ENCODE measurements at regions of chr20 and their contacts with region 1.

Region 1: DNA sequence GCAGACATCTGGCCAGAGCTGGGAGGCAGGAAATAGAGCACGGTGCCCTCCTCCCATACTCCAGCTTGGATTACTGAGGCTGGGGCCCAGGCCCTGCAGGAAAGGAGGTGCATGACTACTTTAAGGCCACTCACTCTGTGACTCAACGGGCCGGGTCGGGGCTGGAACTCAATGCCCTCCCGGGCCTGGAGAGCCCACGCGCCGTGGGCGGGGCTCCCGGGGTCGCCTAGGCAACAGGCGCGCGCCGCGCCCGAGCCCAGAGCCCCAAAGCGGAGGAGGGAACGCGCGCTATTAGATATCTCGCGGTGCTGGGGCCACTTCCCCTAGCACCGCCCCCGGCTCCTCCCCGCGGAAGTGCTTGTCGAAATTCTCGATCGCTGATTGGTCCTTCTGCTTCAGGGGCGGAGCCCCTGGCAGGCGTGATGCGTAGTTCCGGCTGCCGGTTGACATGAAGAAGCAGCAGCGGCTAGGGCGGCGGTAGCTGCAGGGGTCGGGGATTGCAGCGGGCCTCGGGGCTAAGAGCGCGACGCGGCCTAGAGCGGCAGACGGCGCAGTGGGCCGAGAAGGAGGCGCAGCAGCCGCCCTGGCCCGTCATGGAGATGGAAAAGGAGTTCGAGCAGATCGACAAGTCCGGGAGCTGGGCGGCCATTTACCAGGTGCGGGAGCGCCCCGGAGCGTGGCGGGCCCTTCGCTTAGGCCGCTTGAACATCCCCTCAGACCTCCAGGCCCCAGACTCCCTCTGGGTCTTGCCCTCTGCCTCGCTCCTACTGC is at the start of gene PTPN1:
- DNase-seq: peak; percentile 97
- ATAC-seq: peak; percentile 90
- H3K4me3 Mint-ChIP-seq: peak within 1 kb of the TSS; percentile 90
- H3K27ac Mint-ChIP-seq: peak within 1 kb of the TSS; percentile 96
- H3K4me1 Mint-ChIP-seq: peaks cover 48% of the 10 kb centered on the region
- H3K27me3 Mint-ChIP-seq: no peaks in the 10 kb centered on the region
- CTCF ChIP-seq: no peak
- total RNA-seq, gene PTPN1: 212 and 227 TPM in 2 replicates

Region 2: GRCh38 chr20:49278036-49278817 is 1231.9 kb before region 1 on chr20 and contains the start of gene ZNFX1:
- CTCF ChIA-PET with region 1: no interaction called
- POLR2A ChIA-PET with region 1: no interaction called
- intact Hi-C with region 1: loop called (anchors 10 kb)
- DNase-seq: peak; percentile 96
- ATAC-seq: peak; percentile 81
- H3K4me3 Mint-ChIP-seq: peak within 1 kb of the TSS; percentile 98
- H3K27ac Mint-ChIP-seq: peak within 1 kb of the TSS; percentile 98
- H3K4me1 Mint-ChIP-seq: peaks cover 66% of the 10 kb centered on the region
- H3K27me3 Mint-ChIP-seq: no peaks in the 10 kb centered on the region
- CTCF ChIP-seq: no peak
- total RNA-seq, gene ZNFX1: 49.6 and 51.9 TPM in 2 replicates

Region 3: DNA sequence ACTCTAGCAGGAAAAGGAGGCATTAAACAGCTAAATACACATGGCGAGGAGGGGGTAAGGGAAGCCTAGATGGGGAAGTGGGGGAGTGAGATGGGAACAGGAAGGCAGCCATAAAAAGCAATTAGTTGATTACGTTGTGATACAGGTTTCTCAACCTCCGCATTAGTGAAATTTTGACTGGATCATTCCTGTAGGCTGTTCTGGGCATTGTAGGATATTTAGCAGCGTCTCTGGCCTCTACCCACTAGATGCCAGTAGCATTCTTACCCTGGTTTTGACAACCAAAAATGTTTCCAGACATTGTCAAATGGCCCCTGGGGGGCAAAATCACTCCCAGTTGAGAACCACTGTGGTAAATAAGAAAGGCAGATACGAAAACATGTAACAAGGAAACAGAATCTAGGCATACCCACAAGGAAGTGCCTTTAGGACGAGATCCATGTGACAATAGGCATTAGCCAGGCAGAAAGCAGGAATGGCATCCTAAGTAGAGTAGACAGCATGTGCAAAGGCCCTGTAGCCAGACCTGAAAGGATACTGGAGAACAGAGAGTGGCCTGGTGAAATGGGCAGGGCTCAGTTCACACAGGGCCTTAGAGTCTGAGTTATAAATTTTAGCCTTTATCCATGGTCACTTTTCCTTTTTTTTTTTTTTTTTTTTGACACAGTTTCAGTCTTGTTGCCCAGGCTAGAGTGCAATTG is 25.7 kb before region 1 on chr20:
- CTCF ChIA-PET with region 1: interaction called, 10 read pairs
- POLR2A ChIA-PET with region 1: interaction called, 20 read pairs
- intact Hi-C with region 1: loop called (anchors 1 kb)
- DNase-seq: no peak
- ATAC-seq: no peak
- H3K4me3 Mint-ChIP-seq: peak overlapping the region; percentile 91
- H3K27ac Mint-ChIP-seq: peak overlapping the region; percentile 93
- H3K4me1 Mint-ChIP-seq: peaks cover 49% of the 10 kb centered on the region
- H3K27me3 Mint-ChIP-seq: no peaks in the 10 kb centered on the region
- CTCF ChIP-seq: no peak

Region 4: GRCh38 chr20:50498081-50498776 is 11.9 kb before region 1 on chr20:
- CTCF ChIA-PET with region 1: interaction called, 8 read pairs
- POLR2A ChIA-PET with region 1: interaction called, 64 read pairs
- intact Hi-C with region 1: loop called (anchors 1 kb)
- DNase-seq: no peak
- ATAC-seq: peak; percentile 81
- H3K4me3 Mint-ChIP-seq: peak overlapping the region; percentile 71
- H3K27ac Mint-ChIP-seq: peak overlapping the region; percentile 99
- H3K4me1 Mint-ChIP-seq: peaks cover 49% of the 10 kb centered on the region
- H3K27me3 Mint-ChIP-seq: no peaks in the 10 kb centered on the region
- CTCF ChIP-seq: no peak

Region 5: GRCh38 chr20:50569864-50570836 is 60.0 kb after region 1 on chr20:
- CTCF ChIA-PET with region 1: interaction called, 154 read pairs
- POLR2A ChIA-PET with region 1: interaction called, 1,679 read pairs
- intact Hi-C with region 1: loop called (anchors 1 kb)
- DNase-seq: peak; percentile 20
- ATAC-seq: peak; percentile 90
- H3K4me3 Mint-ChIP-seq: peak overlapping the region; percentile 46
- H3K27ac Mint-ChIP-seq: peak overlapping the region; percentile 87
- H3K4me1 Mint-ChIP-seq: peaks cover 70% of the 10 kb centered on the region
- H3K27me3 Mint-ChIP-seq: no peaks in the 10 kb centered on the region
- CTCF ChIP-seq: no peak

Region 6: GRCh38 chr20:50588034-50588611 is 78.0 kb after region 1 on chr20:
- CTCF ChIA-PET with region 1: interaction called, 11 read pairs
- POLR2A ChIA-PET with region 1: interaction called, 11 read pairs
- intact Hi-C with region 1: no loop called
- DNase-seq: peak; percentile 63
- ATAC-seq: peak; percentile 64
- H3K4me3 Mint-ChIP-seq: no peak overlapping the region
- H3K27ac Mint-ChIP-seq: peak overlapping the region; percentile 54
- H3K4me1 Mint-ChIP-seq: peaks cover 13% of the 10 kb centered on the region
- H3K27me3 Mint-ChIP-seq: no peaks in the 10 kb centered on the region
- CTCF ChIP-seq: peak; percentile 64

Region 7: GRCh38 chr20:50815162-50815989 is 305.3 kb after region 1 on chr20:
- CTCF ChIA-PET with region 1: no interaction called
- POLR2A ChIA-PET with region 1: no interaction called
- intact Hi-C with region 1: loop called (anchors 10 kb)
- DNase-seq: no peak
- ATAC-seq: peak; percentile 56
- H3K4me3 Mint-ChIP-seq: peak overlapping the region; percentile 81
- H3K27ac Mint-ChIP-seq: peak overlapping the region; percentile 98
- H3K4me1 Mint-ChIP-seq: peaks cover 96% of the 10 kb centered on the region
- H3K27me3 Mint-ChIP-seq: no peaks in the 10 kb centered on the region
- CTCF ChIP-seq: no peak